Dorsolateral prefrontal cortex (tissue), 120 donors: ENCODE measurements at regions of chr13 and their contacts with region 1.

Region 1: GRCh38 chr13:97809576-97809975 is 143.9 kb upstream of the IPO5 start:
- DNase-seq: no peak
- H3K4me3 ChIP-seq: no peak overlapping the region
- H3K27ac ChIP-seq: peak overlapping the region in 7 of 59 donors; percentile 2 to 61 (median 21)
- H3K27me3 ChIP-seq: no peaks in the 10 kb centered on the region
- CTCF ChIP-seq: no peak

Region 2: GRCh38 chr13:97018029-97018831 is 791.3 kb before region 1 on chr13:
- intact Hi-C with region 1: loop called (anchors 10 kb)
- DNase-seq: peak in 4 of 10 donors; percentile 13 to 54 (median 40)
- H3K4me3 ChIP-seq: peak overlapping the region in 14 of 59 donors; percentile 0 to 36 (median 12)
- H3K27ac ChIP-seq: no peak overlapping the region
- H3K27me3 ChIP-seq: no peaks in the 10 kb centered on the region
- CTCF ChIP-seq: peak; percentile 79 to 98 (median 90)

Region 3: DNA sequence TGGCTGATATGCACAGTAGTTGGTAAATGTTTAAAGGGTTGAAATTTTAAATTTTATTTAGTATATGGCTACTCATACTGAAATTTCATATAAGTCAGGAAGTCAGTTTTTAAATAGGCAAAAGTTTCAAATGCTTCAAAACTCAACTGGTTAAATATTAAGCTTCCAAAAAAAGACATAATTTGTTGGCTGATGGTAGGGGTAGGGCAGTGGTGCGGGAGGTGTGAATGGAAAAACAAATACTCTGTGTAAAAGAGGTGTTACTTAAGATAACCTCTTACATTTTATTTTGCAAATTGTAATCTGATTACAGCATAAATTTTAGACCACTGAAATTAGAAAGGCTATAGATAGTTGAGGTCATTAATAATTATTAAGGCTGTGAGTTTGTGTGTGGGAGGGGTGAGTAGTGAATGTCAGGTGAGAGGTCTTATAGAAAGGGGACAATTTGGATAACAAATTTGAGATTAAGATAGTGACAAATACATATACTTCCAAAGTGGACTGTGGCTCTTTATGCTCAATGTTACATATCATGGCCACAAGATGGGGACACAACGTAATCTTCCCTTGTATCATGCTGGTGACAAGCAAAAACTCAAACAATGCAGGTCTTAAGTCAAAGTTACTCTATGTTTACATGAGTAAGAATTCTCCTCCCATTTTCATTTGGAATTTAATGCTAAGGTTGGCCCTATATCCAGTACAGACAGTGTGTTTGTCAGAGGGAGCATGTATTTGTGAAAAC is 778.7 kb before region 1 on chr13:
- intact Hi-C with region 1: loop called in 1 of 2 experiments (anchors 10 kb)
- DNase-seq: no peak
- H3K4me3 ChIP-seq: no peak overlapping the region
- H3K27ac ChIP-seq: no peak overlapping the region
- H3K27me3 ChIP-seq: no peaks in the 10 kb centered on the region
- CTCF ChIP-seq: peak in 50 of 56 donors; percentile 15 to 62 (median 38)

Region 4: GRCh38 chr13:97411984-97412383 is 397.6 kb before region 1 on chr13:
- intact Hi-C with region 1: loop called in 1 of 2 experiments (anchors 10 kb)
- DNase-seq: no peak
- H3K4me3 ChIP-seq: no peak overlapping the region
- H3K27ac ChIP-seq: no peak overlapping the region
- H3K27me3 ChIP-seq: no peaks in the 10 kb centered on the region
- CTCF ChIP-seq: no peak

Region 5: GRCh38 chr13:97749174-97749573 is 60.4 kb before region 1 on chr13:
- intact Hi-C with region 1: loop called in 1 of 2 experiments (anchors 5 kb)
- DNase-seq: no peak
- H3K4me3 ChIP-seq: no peak overlapping the region
- H3K27ac ChIP-seq: no peak overlapping the region
- H3K27me3 ChIP-seq: no peaks in the 10 kb centered on the region
- CTCF ChIP-seq: peak in 25 of 56 donors; percentile 9 to 55 (median 22)